Left ventricle myocardium inferior (tissue), 1 donor: ENCODE measurements at regions of chr19 and their contacts with region 1.

Region 1: GRCh38 chr19:42529248-42529764 is 1.0 kb upstream of the CEACAM1 start:
- DNase-seq: peak; percentile 25
- H3K4me3 ChIP-seq: peak overlapping the region; percentile 59
- H3K27ac ChIP-seq: peak overlapping the region; percentile 80
- H3K4me1 ChIP-seq: peaks cover 25% of the 10 kb centered on the region
- H3K27me3 ChIP-seq: no peaks in the 10 kb centered on the region
- CTCF ChIP-seq: peak; percentile 87

Region 2: DNA sequence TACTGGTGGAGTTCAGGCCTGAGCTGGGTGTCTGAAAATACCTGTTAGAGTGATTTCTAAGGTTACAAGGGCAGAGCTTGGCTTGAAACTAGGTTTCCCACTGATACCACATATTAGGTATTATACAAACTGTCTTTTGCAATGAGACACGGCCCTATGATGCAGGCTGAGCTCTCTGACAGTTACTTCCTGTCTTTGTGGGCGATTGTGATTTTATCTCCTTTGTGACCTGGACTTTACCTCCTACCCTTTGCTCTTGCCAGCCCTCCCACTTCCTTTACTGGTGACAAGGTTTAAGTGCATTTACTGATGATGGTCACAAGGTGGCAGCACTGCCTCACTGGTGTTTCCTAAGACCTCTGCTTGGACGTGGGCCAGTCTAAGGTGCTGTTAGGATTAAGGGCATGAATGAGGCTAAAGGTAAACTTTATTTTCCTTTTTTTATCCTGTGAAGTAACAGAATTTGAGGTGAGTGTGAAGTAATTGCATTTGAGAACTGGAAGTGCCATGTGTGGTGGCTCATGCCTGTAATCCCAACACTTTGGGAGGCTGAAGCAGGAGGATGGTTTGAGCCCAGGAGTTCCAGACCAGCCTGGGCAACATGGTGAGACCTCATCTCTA is 78.9 kb before region 1 on chr19:
- intact Hi-C with region 1: loop called (anchors 5 kb)
- DNase-seq: peak; percentile 64
- H3K4me3 ChIP-seq: no peak overlapping the region
- H3K27ac ChIP-seq: peak overlapping the region; percentile 60
- H3K4me1 ChIP-seq: peaks cover 18% of the 10 kb centered on the region
- H3K27me3 ChIP-seq: peaks cover 7% of the 10 kb centered on the region
- CTCF ChIP-seq: peak; percentile 92

Region 3: DNA sequence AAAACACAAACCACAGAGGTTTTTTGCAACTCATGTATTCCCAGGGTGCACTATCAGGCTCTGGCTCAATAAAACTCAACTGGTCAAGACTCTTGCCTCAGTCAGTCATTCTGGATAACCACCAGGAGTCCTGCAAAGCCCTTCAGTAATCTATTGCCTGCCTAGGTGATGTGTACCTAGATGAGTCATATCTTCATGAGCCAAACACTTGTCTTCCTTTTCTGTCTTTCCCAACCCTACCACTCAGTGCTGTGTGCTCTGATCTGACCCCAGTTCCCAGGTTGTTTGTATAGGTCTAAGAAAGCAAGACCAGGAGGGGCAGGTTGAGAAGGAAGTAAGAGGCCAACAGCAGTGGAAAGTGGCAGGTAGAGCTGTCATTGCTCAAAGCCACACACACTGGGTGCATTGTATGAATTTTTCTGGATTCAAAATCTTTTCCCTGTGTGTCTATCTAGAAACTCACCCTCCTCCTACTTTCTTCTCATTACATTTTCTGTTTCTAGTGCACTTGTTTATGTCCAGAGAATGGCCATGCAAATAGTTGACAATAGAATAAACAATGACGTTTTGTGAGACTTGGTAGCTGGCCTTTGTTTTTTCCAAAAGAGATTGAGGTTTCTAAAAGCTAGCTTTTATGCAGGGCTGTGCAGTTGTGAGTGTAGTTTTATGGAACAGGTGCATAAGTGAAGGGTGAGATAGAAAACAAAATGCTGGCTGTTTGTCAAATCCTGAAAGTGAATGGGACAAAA is 302.1 kb after region 1 on chr19:
- intact Hi-C with region 1: no loop called
- DNase-seq: no peak
- H3K4me3 ChIP-seq: no peak overlapping the region
- H3K27ac ChIP-seq: no peak overlapping the region
- H3K4me1 ChIP-seq: no peaks in the 10 kb centered on the region
- H3K27me3 ChIP-seq: peaks cover 8% of the 10 kb centered on the region
- CTCF ChIP-seq: no peak